CD14-positive monocyte (primary cell): ENCODE measurements at regions of chr7 and their contacts with region 1.

Region 1: GRCh38 chr7:151248346-151249033 is at the start of gene SMARCD3:
- DNase-seq: no peak
- H3K4me3 ChIP-seq: peak within 1 kb of the TSS; percentile 11 to 63 (median 27)
- H3K4me3 Mint-ChIP-seq: peak within 1 kb of the TSS; percentile 82 to 96
- H3K27ac ChIP-seq: no peak within 1 kb of the TSS
- H3K27ac Mint-ChIP-seq: peak within 1 kb of the TSS in 3 of 7 donors; percentile 42 to 60 (median 46)
- H3K4me1 ChIP-seq: peaks cover 51 to 64% of the 10 kb centered on the region in 2 donors
- H3K4me1 Mint-ChIP-seq: peaks cover 73% of the 10 kb centered on the region
- H3K27me3 ChIP-seq: peaks cover 61 to 82% of the 10 kb centered on the region in 2 donors
- H3K27me3 Mint-ChIP-seq: peaks cover 77 to 95% (median 82%) of the 10 kb centered on the region in 3 donors
- CTCF ChIP-seq: no peak
- polyA plus RNA-seq, gene SMARCD3: 104 to 183 (median 112) TPM

Region 2: GRCh38 chr7:151226875-151227782 is 21.4 kb before region 1 on chr7 and contains the start of gene ABCF2:
- intact Hi-C with region 1: loop called in 1 of 2 experiments (anchors 2 kb)
- DNase-seq: peak; percentile 97 to 98 (median 98)
- H3K4me3 ChIP-seq: peak within 1 kb of the TSS; percentile 47 to 94 (median 66)
- H3K4me3 Mint-ChIP-seq: peak within 1 kb of the TSS; percentile 93 to 96
- H3K27ac ChIP-seq: peak within 1 kb of the TSS; percentile 51 to 85
- H3K27ac Mint-ChIP-seq: peak within 1 kb of the TSS; percentile 90 to 97 (median 93)
- H3K4me1 ChIP-seq: peaks cover 29 to 34% of the 10 kb centered on the region in 2 donors
- H3K4me1 Mint-ChIP-seq: peaks cover 34% of the 10 kb centered on the region
- H3K27me3 ChIP-seq: no peaks in the 10 kb centered on the region
- H3K27me3 Mint-ChIP-seq: peaks cover 0 to 3% (median 1%) of the 10 kb centered on the region in 3 donors
- CTCF ChIP-seq: no peak
- polyA plus RNA-seq, gene ABCF2: 18.0 to 22.0 (median 21.1) TPM

Region 3: GRCh38 chr7:151271699-151272355 is 23.3 kb after region 1 on chr7:
- intact Hi-C with region 1: loop called in 1 of 2 experiments (anchors 2 kb)
- DNase-seq: peak; percentile 94 to 99 (median 98)
- H3K4me3 ChIP-seq: peak overlapping the region in 1 of 3 experiments; percentile 79
- H3K4me3 Mint-ChIP-seq: peak overlapping the region; percentile 9 to 68
- H3K27ac ChIP-seq: peak overlapping the region; percentile 86 to 92
- H3K27ac Mint-ChIP-seq: peak overlapping the region; percentile 91 to 99 (median 95)
- H3K4me1 ChIP-seq: peaks cover 61 to 63% of the 10 kb centered on the region in 2 donors
- H3K4me1 Mint-ChIP-seq: peaks cover 72% of the 10 kb centered on the region
- H3K27me3 ChIP-seq: no peaks in the 10 kb centered on the region
- H3K27me3 Mint-ChIP-seq: peaks cover 2 to 6% (median 3%) of the 10 kb centered on the region in 3 donors
- CTCF ChIP-seq: peak; percentile 14